CD14-positive monocyte (primary cell): ENCODE measurements at regions of chr22 and their contacts with region 1.

Region 1: GRCh38 chr22:31399211-31400028 is at the start of gene DRG1:
- DNase-seq: peak; percentile 89 to 92 (median 91)
- H3K4me3 ChIP-seq: peak within 1 kb of the TSS; percentile 72 to 98 (median 73)
- H3K4me3 Mint-ChIP-seq: peak within 1 kb of the TSS; percentile 92 to 98
- H3K27ac ChIP-seq: peak within 1 kb of the TSS; percentile 72 to 90
- H3K27ac Mint-ChIP-seq: peak within 1 kb of the TSS; percentile 89 to 97 (median 95)
- H3K4me1 ChIP-seq: peaks cover 16 to 21% of the 10 kb centered on the region in 2 donors
- H3K4me1 Mint-ChIP-seq: peaks cover 14% of the 10 kb centered on the region
- H3K27me3 ChIP-seq: no peaks in the 10 kb centered on the region
- H3K27me3 Mint-ChIP-seq: peaks cover 0 to 2% (median 0%) of the 10 kb centered on the region in 3 donors
- CTCF ChIP-seq: no peak
- polyA plus RNA-seq, gene DRG1: 24.7 to 81.3 (median 68.2) TPM

Region 2: GRCh38 chr22:31345331-31346254 is 53.8 kb before region 1 on chr22:
- intact Hi-C with region 1: loop called (anchors 2 to 5 kb)
- DNase-seq: peak; percentile 74 to 84 (median 80)
- H3K4me3 ChIP-seq: peak overlapping the region; percentile 62 to 86 (median 80)
- H3K4me3 Mint-ChIP-seq: peak overlapping the region; percentile 81 to 90
- H3K27ac ChIP-seq: peak overlapping the region in 1 of 2 donors; percentile 41
- H3K27ac Mint-ChIP-seq: peak overlapping the region in 6 of 7 donors; percentile 58 to 85 (median 68)
- H3K4me1 ChIP-seq: peaks cover 37 to 47% of the 10 kb centered on the region in 2 donors
- H3K4me1 Mint-ChIP-seq: peaks cover 57% of the 10 kb centered on the region
- H3K27me3 ChIP-seq: no peaks in the 10 kb centered on the region
- H3K27me3 Mint-ChIP-seq: peaks cover 2 to 3% (median 2%) of the 10 kb centered on the region in 3 donors
- CTCF ChIP-seq: peak; percentile 97